Posterior vena cava (tissue), 2 donors: ENCODE measurements at regions of chr3 and their contacts with region 1.

Region 1: DNA sequence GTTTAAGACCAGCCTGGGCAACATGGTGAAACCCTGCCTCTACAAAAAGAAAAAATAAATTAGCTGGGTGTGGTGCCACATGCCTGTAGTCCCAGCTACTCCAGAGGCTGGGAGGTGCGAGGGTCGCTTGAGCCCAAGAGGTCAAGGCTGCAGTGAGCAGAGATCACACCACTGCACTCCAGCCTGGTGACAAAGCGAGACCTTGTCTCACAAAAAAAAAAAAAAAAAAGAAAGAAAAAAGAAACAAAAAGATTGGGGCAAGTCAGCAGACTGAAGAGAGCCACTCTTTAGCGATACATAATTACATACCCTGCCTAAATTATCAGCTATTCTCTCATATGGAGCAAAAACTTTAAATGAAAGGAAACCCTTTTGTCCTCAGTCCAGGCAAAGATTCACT is 53.6 kb upstream of the MAP3K13 start:
- DNase-seq: no peak

Region 2: DNA sequence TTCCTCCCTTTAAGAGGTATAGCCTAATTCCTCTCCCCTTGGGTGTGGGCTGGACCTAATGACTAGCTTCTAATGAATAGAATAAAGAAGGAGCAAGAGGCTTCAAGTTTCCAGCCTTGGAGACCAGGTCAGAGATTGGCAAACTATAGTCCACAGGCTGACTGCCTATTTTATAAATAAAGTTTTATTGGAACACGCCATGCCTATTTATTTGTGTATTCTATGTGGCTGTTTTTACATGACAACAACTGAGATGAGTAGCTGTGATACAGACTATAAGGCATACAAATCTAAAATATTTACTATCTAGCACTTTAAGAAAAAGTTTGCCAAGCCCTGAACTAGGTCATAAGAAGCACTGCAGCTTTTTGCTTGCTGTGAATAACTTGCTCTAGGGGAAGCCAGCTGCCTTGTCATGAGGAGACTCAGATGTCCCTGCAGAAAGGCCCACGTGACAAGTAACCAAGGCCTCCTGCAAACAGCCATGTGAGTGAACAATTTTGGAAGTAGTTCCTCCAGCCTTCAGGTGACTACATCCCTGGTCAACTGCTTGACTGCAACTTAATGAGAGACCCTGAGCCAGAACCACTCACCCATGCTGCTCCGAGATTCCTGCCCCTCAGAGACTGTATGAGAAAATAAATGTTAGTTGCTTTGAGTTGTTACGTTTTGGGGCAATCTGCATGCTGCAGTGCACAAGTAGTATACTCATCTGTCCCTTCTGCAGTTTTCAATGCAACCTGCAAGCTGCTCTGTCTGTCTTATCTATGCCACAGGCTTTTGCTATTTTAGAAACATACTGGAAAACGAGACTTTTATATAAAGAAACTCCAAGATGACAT is 32.5 kb after region 1 on chr3:
- intact Hi-C with region 1: loop called in 1 of 2 experiments (anchors 1 kb)
- DNase-seq: no peak